GM12878 (cell line): ENCODE measurements at regions of chr1 and their contacts with region 1.

Region 1: GRCh38 chr1:193083365-193084088 is 21.7 kb downstream of the GLRX2 start:
- DNase-seq: peak; percentile 47
- ATAC-seq: peak; percentile 92
- H3K4me3 ChIP-seq: no peak overlapping the region
- H3K27ac ChIP-seq: peak overlapping the region; percentile 56
- H3K4me1 ChIP-seq: peaks cover 11% of the 10 kb centered on the region; the same call in 1 of the 2 replicates
- H3K27me3 ChIP-seq: no peaks in the 10 kb centered on the region
- CTCF ChIP-seq: no peak
- EP300 ChIP-seq: peak; percentile 66 to 78; a peak in 3 of 4 replicates
- POLR2A ChIP-seq: no peak
- RAD21 ChIP-seq: no peak

Region 2: GRCh38 chr1:193104906-193105820 is 21.6 kb after region 1 on chr1 and contains the start of gene GLRX2:
- CTCF ChIA-PET with region 1: interaction called, 5 read pairs
- POLR2A ChIA-PET with region 1: interaction called, 4 read pairs
- RAD21 ChIA-PET with region 1: interaction called, 9 read pairs
- SMC1A ChIA-PET with region 1: interaction called, 24 read pairs
- in situ Hi-C with region 1: no loop called
- intact Hi-C with region 1: no loop called
- DNase-seq: no peak
- ATAC-seq: peak; percentile 95
- H3K4me3 ChIP-seq: peak within 1 kb of the TSS; percentile 87
- H3K27ac ChIP-seq: peak within 1 kb of the TSS; percentile 58
- H3K4me1 ChIP-seq: no peaks in the 10 kb centered on the region
- H3K27me3 ChIP-seq: no peaks in the 10 kb centered on the region
- CTCF ChIP-seq: peak in 1 of 3 experiments; percentile 10; a peak in 1 of 6 replicates
- EP300 ChIP-seq: no peak
- POLR2A ChIP-seq: peak; percentile 86
- RAD21 ChIP-seq: peak; percentile 32; the same call in 1 of the 2 replicates
- polyA plus RNA-seq, gene GLRX2: 5.5 to 7.8 TPM